Activated CD4-positive, alpha-beta memory T cell treated with anti-CD3 and anti-CD28 coated beads for 36 hours (primary cell): ENCODE measurements at regions of chr1 and their contacts with region 1.

Region 1: GRCh38 chr1:205523891-205524793 is 19.7 kb downstream of the CDK18 start:
- DNase-seq: peak; percentile 82
- H3K4me3 Mint-ChIP-seq: no peak overlapping the region
- H3K27ac Mint-ChIP-seq: no peak overlapping the region
- H3K4me1 Mint-ChIP-seq: no peaks in the 10 kb centered on the region
- H3K27me3 Mint-ChIP-seq: peaks cover 2% of the 10 kb centered on the region

Region 2: DNA sequence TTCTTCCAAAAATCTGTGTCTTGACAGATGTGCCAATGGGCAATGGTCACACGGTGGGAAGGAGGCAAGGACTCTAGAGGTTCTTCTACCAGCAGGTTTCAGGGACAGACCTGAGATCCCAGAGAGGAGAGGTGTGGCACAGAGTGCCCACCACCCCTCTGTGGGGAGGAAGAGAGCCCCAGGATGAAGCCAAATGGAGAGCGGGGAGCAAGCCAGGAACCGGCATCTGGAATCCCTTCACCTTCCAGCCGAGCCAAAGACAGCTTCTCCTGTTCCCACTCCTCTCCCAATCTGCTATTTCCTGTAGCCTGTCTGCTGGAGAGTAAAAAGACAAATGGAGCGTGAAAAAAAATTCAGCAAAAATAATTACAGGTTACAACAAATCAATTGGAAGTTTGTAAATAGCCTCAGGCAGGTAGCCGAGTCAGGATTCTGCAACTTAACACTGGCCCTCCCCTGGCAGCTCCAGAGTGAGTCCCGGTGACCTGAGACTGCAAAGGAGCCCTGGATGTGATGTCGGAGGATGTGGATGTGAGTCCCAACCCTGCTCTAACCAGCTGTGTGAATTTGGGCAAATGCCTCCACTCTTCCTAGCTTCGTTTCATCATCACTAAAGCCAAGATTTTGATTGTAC is 793.2 kb before region 1 on chr1:
- CTCF ChIA-PET with region 1: no interaction called
- POLR2A ChIA-PET with region 1: no interaction called
- intact Hi-C with region 1: no loop called
- DNase-seq: no peak
- H3K4me3 Mint-ChIP-seq: no peak overlapping the region
- H3K27ac Mint-ChIP-seq: no peak overlapping the region
- H3K4me1 Mint-ChIP-seq: no peaks in the 10 kb centered on the region
- H3K27me3 Mint-ChIP-seq: peaks cover 5% of the 10 kb centered on the region

Region 3: DNA sequence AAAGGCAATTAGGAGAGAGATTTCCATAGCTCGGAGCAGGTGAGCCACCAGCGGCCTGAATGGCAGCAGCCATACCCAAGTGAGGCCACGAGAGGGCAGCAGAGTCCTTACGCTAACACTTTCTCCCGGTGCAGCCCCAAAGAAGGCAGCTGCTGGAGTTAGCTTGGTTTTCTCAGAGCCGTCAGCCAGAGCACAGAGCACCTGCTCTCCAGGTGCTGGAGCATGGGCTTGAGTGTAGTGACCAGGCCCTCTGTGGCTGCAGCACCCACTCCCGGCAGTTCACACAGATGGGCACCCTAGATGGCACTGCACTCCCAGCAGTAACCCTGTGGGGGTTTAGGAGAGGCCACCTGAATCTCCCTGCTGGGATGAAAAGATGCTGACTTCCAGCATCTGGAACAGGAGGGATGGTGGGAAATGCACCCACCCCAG is 250.6 kb before region 1 on chr1:
- CTCF ChIA-PET with region 1: interaction called, 18 read pairs
- POLR2A ChIA-PET with region 1: no interaction called
- intact Hi-C with region 1: no loop called
- DNase-seq: peak; percentile 91
- H3K4me3 Mint-ChIP-seq: no peak overlapping the region
- H3K27ac Mint-ChIP-seq: no peak overlapping the region
- H3K4me1 Mint-ChIP-seq: peaks cover 30% of the 10 kb centered on the region
- H3K27me3 Mint-ChIP-seq: no peaks in the 10 kb centered on the region

Region 4: DNA sequence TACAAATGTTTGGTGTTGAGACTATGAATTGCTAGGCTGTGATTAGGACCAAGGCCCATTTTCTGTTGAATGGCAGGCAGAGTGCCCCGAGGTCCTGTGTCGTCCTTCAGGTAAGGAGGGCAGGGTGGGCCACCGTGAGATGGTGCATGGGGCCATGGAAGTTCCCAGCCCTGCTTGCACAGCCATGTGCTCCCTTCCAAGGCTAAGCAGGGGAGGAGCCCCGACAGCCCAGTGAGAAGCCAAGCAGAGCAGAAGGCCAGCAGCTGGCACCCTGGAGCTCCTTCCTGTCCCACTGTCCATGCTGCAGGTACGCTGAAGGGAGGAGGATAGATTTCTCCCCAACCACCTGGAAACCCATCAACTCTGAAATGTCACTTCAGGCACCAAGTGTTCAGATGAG is 194.4 kb before region 1 on chr1:
- CTCF ChIA-PET with region 1: interaction called, 79 read pairs
- POLR2A ChIA-PET with region 1: no interaction called
- intact Hi-C with region 1: no loop called
- DNase-seq: no peak
- H3K4me3 Mint-ChIP-seq: no peak overlapping the region
- H3K27ac Mint-ChIP-seq: no peak overlapping the region
- H3K4me1 Mint-ChIP-seq: peaks cover 9% of the 10 kb centered on the region
- H3K27me3 Mint-ChIP-seq: peaks cover 4% of the 10 kb centered on the region

Region 5: GRCh38 chr1:205396967-205397616 is 127.0 kb before region 1 on chr1:
- CTCF ChIA-PET with region 1: interaction called, 114 read pairs
- POLR2A ChIA-PET with region 1: interaction called, 4 read pairs
- intact Hi-C with region 1: loop called (anchors 1 kb)
- DNase-seq: peak; percentile 27
- H3K4me3 Mint-ChIP-seq: no peak overlapping the region
- H3K27ac Mint-ChIP-seq: no peak overlapping the region
- H3K4me1 Mint-ChIP-seq: no peaks in the 10 kb centered on the region
- H3K27me3 Mint-ChIP-seq: peaks cover 6% of the 10 kb centered on the region

Region 6: GRCh38 chr1:205631727-205632373 is 107.7 kb after region 1 on chr1 and contains the start of gene ELK4:
- CTCF ChIA-PET with region 1: interaction called, 34 read pairs
- POLR2A ChIA-PET with region 1: no interaction called
- intact Hi-C with region 1: loop called (anchors 2 kb)
- DNase-seq: peak; percentile 100
- H3K4me3 Mint-ChIP-seq: peak within 1 kb of the TSS; percentile 85
- H3K27ac Mint-ChIP-seq: peak within 1 kb of the TSS; percentile 90
- H3K4me1 Mint-ChIP-seq: peaks cover 34% of the 10 kb centered on the region
- H3K27me3 Mint-ChIP-seq: no peaks in the 10 kb centered on the region
- total RNA-seq, gene ELK4: 60.7 to 65.8 TPM